ENCODE measurements at regions of chr2 and their contacts with region 1.

Region 1: GRCh38 chr2:96888072-96889011 is 18.5 kb upstream of the SEMA4C start:
- DNase-seq: no peak
- ATAC-seq: no peak
- H3K4me3 ChIP-seq: no peak overlapping the region
- H3K27ac ChIP-seq: peak overlapping the region; percentile 56; the same call in 2 of the 3 replicates
- H3K4me1 ChIP-seq: peaks cover 54 to 86% of the 10 kb centered on the region in 2 experiments
- H3K27me3 ChIP-seq: no peaks in the 10 kb centered on the region; a peak in 1 of 5 replicates
- CTCF ChIP-seq: no peak
- EP300 ChIP-seq: no peak
- POLR2A ChIP-seq: no peak
- RAD21 ChIP-seq: no peak

Region 2: DNA sequence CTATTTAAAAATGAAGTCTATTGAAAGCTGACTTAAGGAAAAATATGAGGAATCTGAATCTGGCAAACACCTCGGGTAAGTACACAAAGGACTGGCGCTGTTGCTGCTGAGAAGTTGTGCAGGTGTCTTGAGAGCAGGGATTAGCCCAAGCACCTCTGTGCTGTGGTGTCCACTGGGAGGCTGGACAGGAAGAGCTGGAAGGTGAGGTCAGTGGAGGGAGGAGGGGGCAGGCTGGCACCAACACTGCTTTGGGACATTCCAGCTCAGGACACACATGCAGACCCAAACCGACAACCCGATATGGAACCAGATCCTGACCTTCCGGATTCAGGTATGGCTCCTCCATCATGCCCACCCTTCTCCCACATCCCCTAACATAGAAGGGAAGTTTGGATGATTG is 225.2 kb before region 1 on chr2:
- CTCF ChIA-PET with region 1: no interaction called
- POLR2A ChIA-PET with region 1: no interaction called
- in situ Hi-C with region 1: no loop called
- intact Hi-C with region 1: no loop called
- DNase-seq: no peak
- ATAC-seq: no peak
- H3K4me3 ChIP-seq: no peak overlapping the region
- H3K27ac ChIP-seq: no peak overlapping the region
- H3K4me1 ChIP-seq: no peaks in the 10 kb centered on the region; a peak in 1 of 5 replicates
- H3K27me3 ChIP-seq: peaks cover 5 to 21% of the 10 kb centered on the region in 2 experiments; a peak in 4 of 5 replicates
- CTCF ChIP-seq: no peak
- EP300 ChIP-seq: no peak
- POLR2A ChIP-seq: no peak
- RAD21 ChIP-seq: no peak

Region 3: GRCh38 chr2:96874118-96874831 is 14.1 kb before region 1 on chr2:
- CTCF ChIA-PET with region 1: no interaction called
- POLR2A ChIA-PET with region 1: interaction called, 112 read pairs
- in situ Hi-C with region 1: no loop called
- intact Hi-C with region 1: no loop called
- DNase-seq: peak in 2 of 4 experiments; percentile 38 to 43
- ATAC-seq: peak; percentile 22
- H3K4me3 ChIP-seq: no peak overlapping the region
- H3K27ac ChIP-seq: peak overlapping the region; percentile 53; the same call in 2 of the 3 replicates
- H3K4me1 ChIP-seq: peaks cover 43 to 91% of the 10 kb centered on the region in 2 experiments
- H3K27me3 ChIP-seq: no peaks in the 10 kb centered on the region
- CTCF ChIP-seq: no peak
- EP300 ChIP-seq: no peak
- POLR2A ChIP-seq: no peak
- RAD21 ChIP-seq: no peak